ENCODE measurements at regions of chr19 and their contacts with region 1.

Region 1: GRCh38 chr19:41691268-41691970 is 3.3 kb upstream of the CEACAM7 start:
- DNase-seq: peak; percentile 4 to 60
- H3K4me3 ChIP-seq: no peak overlapping the region
- H3K4me1 ChIP-seq: no peaks in the 10 kb centered on the region
- H3K27me3 ChIP-seq: no peaks in the 10 kb centered on the region

Region 2: GRCh38 chr19:41501854-41502253 is 189.6 kb before region 1 on chr19:
- in situ Hi-C with region 1: no loop called
- DNase-seq: no peak
- H3K4me3 ChIP-seq: no peak overlapping the region
- H3K4me1 ChIP-seq: no peaks in the 10 kb centered on the region
- H3K27me3 ChIP-seq: no peaks in the 10 kb centered on the region

Region 3: GRCh38 chr19:41746593-41747227 is 55.3 kb after region 1 on chr19:
- in situ Hi-C with region 1: loop called (anchors 5 kb)
- DNase-seq: peak; percentile 23 to 55
- H3K4me3 ChIP-seq: no peak overlapping the region
- H3K4me1 ChIP-seq: no peaks in the 10 kb centered on the region
- H3K27me3 ChIP-seq: peaks cover 17% of the 10 kb centered on the region; the same call in 1 of the 2 replicates